Right cardiac atrium (tissue), 5 donors: ENCODE measurements at regions of chr4 and their contacts with region 1.

Region 1: GRCh38 chr4:139734875-139735380 is 69.3 kb downstream of the MGST2 start:
- DNase-seq: peak; percentile 88 to 96 (median 95)
- ATAC-seq: peak; percentile 94 to 95
- H3K4me3 ChIP-seq: peak overlapping the region; percentile 49
- H3K27ac ChIP-seq: peak overlapping the region; percentile 57
- H3K4me1 ChIP-seq: peaks cover 2% of the 10 kb centered on the region
- H3K27me3 ChIP-seq: no peaks in the 10 kb centered on the region

Region 2: DNA sequence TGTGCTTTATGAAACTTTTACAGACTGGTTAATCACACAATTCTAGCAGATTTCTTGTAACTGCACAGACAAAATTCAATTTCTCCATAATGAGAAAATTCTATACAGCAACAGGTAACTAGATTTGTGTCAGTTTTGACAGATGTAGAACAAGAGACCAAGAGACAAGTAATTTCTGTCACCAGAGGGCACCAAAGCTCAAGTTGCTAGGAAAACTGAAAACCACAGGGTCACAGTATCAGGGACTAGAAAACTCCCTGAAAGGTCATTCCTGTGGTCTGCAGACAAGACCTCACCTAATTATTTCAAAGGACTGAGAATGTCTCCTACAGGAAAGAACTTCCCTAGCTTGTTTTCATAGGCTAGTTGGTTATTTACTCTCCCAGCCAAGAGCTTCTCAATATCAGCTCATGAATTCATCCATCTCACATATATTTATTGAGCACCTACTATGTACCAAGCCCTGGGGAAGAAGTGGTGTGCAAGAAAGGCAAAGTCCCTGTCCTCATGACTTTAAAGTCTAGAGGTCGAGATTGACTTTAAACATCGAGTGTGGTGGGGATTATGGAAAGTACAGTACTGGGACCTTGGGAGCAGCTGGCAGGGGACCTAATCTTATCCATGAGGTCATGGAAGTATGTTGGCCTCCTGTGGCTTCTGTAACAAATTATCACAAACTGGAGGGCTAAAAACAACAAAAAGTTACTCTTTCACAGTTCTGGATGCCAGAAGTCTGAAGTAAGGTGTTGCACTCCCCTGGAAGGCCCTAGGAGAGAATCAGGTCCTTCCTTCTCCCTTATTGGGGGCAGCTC is 131.1 kb before region 1 on chr4:
- intact Hi-C with region 1: no loop called
- DNase-seq: no peak
- ATAC-seq: peak; percentile 43 to 58
- H3K4me3 ChIP-seq: no peak overlapping the region
- H3K27ac ChIP-seq: no peak overlapping the region
- H3K4me1 ChIP-seq: no peaks in the 10 kb centered on the region
- H3K27me3 ChIP-seq: no peaks in the 10 kb centered on the region

Region 3: DNA sequence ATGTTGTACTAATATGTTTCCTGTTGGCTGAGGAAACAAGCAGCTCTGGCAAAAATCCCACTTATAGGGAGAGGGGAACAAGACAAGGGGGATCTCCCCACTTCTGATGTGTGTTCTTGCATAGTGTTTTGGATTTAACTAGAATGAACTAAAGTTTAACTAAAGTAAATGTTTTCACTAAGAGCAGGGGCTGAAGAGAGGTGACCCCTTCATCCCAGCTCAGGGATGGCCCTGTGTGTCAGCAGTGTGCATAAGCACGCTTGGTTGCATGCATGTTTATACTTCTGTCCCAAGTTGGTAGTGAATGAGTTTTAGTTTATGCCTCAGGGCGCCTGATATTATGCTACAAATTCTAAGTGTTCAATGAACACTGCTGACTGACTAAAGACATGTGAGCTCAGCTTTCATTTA is 100.1 kb after region 1 on chr4:
- intact Hi-C with region 1: no loop called
- DNase-seq: no peak
- ATAC-seq: no peak
- H3K4me3 ChIP-seq: no peak overlapping the region
- H3K27ac ChIP-seq: no peak overlapping the region
- H3K4me1 ChIP-seq: no peaks in the 10 kb centered on the region
- H3K27me3 ChIP-seq: no peaks in the 10 kb centered on the region

Region 4: GRCh38 chr4:140012688-140013486 is 278.0 kb after region 1 on chr4:
- intact Hi-C with region 1: loop called in 1 of 4 experiments (anchors 10 kb)
- DNase-seq: peak in 2 of 3 donors; percentile 42 to 70
- ATAC-seq: peak; percentile 89 to 91
- H3K4me3 ChIP-seq: no peak overlapping the region
- H3K27ac ChIP-seq: no peak overlapping the region
- H3K4me1 ChIP-seq: no peaks in the 10 kb centered on the region
- H3K27me3 ChIP-seq: no peaks in the 10 kb centered on the region

Region 5: DNA sequence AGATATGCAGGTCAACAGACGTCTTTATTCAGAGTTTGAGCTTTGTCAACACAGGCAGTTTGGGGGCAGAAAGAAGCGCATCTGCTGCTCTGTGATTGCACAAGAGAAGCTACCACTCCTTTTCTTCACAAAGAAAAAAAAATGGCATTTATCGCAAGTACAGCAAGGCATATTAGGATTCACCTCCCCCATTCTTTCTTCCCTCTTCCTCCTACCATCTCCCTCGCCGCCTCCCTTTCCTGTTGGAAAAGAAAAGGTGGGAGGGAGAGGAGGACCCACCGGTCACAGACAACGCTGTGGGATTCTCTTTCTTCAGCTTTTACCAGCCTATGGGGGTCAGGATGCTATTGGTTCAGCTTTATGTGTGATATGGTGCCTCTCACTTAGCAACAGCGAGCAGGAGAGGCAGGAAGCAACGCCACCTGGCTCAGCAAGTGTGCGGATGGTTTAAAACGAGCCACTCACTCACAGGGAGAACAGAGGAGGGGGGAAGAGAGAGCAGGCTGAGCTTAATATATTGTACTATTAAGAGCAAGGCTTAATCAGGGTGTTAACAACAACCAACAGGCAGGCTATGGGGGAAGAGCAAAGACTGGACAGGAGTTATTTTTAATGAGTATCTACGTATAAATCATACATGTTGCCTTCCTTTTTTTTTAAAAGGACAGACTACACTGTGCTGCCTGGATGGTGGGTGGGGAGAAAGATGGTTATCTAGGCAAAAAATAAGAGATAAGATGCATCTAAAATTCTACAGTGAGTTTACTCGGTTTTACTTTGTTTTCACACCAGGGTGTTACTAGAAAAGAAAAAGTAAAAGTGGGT is 314.3 kb after region 1 on chr4:
- intact Hi-C with region 1: loop called in 1 of 4 experiments (anchors 10 kb)
- DNase-seq: peak in 2 of 3 donors; percentile 27 to 52
- ATAC-seq: peak; percentile 72 to 81
- H3K4me3 ChIP-seq: peak overlapping the region; percentile 31
- H3K27ac ChIP-seq: peak overlapping the region; percentile 42
- H3K4me1 ChIP-seq: peaks cover 5% of the 10 kb centered on the region
- H3K27me3 ChIP-seq: no peaks in the 10 kb centered on the region

Region 6: GRCh38 chr4:140252742-140253555 is 518.0 kb after region 1 on chr4:
- intact Hi-C with region 1: loop called (anchors 2 to 10 kb)
- DNase-seq: peak; percentile 71 to 91 (median 91)
- ATAC-seq: peak; percentile 92
- H3K4me3 ChIP-seq: peak overlapping the region; percentile 83
- H3K27ac ChIP-seq: peak overlapping the region; percentile 83
- H3K4me1 ChIP-seq: peaks cover 2% of the 10 kb centered on the region
- H3K27me3 ChIP-seq: no peaks in the 10 kb centered on the region